ENCODE measurements at regions of chr17 and their contacts with region 1.

Region 1: GRCh38 chr17:60599620-60600489 is at the start of gene PPM1D:
- DNase-seq: peak; percentile 99
- H3K4me3 Mint-ChIP-seq: peak within 1 kb of the TSS; percentile 86
- H3K27ac Mint-ChIP-seq: peak within 1 kb of the TSS; percentile 89
- H3K4me1 Mint-ChIP-seq: peaks cover 6% of the 10 kb centered on the region
- H3K27me3 Mint-ChIP-seq: no peaks in the 10 kb centered on the region
- CTCF ChIP-seq: no peak
- total RNA-seq, gene PPM1D: 14.3 and 16.1 TPM in 2 replicates

Region 2: GRCh38 chr17:60496051-60496450 is 103.8 kb before region 1 on chr17:
- CTCF ChIA-PET with region 1: no interaction called
- POLR2A ChIA-PET with region 1: no interaction called
- intact Hi-C with region 1: no loop called
- DNase-seq: no peak
- H3K4me3 Mint-ChIP-seq: no peak overlapping the region
- H3K27ac Mint-ChIP-seq: no peak overlapping the region
- H3K4me1 Mint-ChIP-seq: no peaks in the 10 kb centered on the region
- H3K27me3 Mint-ChIP-seq: no peaks in the 10 kb centered on the region
- CTCF ChIP-seq: no peak

Region 3: DNA sequence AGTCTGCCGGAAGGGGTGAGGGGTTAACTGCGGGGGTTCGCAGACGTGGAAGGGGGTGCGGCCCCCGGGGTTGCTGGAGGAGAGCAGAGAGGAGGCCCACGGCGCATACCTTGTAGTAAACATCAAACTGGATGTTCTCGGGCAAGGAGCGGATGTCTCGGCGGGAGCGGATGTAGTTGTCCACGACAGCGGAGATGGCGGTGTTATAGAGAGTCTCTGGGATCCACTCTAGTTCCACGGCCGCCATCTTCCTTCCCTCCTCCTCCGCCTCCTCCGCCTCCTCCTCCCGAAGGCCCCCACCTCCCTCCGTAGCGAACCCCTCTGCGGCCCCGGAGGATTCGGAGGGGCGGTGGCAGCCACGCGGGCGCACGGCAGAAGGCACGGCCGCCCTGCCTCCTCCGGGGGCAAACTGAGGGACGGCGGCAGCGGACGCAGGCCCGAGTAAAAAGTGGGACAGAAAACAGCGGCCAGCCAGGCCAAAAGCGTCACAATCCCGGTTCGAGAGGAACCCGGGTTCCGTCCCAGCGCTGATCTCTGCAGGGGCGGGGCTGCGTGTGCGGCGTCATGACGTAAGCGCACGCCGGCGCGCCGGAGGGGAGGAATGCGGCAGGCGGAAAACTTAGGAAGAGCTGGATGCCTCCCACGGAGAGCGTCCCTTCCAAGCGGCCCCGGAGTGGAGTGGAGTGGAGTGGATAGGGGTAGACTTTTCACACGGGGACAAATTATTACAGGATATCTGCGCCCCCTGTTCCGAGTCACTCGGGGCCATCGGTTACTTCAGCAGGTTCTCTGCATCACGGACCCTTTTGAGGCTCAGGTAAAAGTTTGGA is 74.0 kb before region 1 on chr17 and contains the start of gene APPBP2:
- CTCF ChIA-PET with region 1: interaction called, 3 read pairs
- POLR2A ChIA-PET with region 1: interaction called, 113 read pairs
- intact Hi-C with region 1: loop called (anchors 2 kb)
- DNase-seq: peak; percentile 85
- H3K4me3 Mint-ChIP-seq: peak within 1 kb of the TSS; percentile 91
- H3K27ac Mint-ChIP-seq: peak within 1 kb of the TSS; percentile 98
- H3K4me1 Mint-ChIP-seq: peaks cover 30% of the 10 kb centered on the region
- H3K27me3 Mint-ChIP-seq: no peaks in the 10 kb centered on the region
- CTCF ChIP-seq: no peak
- total RNA-seq, gene APPBP2: 33.1 and 39.6 TPM in 2 replicates

Region 4: DNA sequence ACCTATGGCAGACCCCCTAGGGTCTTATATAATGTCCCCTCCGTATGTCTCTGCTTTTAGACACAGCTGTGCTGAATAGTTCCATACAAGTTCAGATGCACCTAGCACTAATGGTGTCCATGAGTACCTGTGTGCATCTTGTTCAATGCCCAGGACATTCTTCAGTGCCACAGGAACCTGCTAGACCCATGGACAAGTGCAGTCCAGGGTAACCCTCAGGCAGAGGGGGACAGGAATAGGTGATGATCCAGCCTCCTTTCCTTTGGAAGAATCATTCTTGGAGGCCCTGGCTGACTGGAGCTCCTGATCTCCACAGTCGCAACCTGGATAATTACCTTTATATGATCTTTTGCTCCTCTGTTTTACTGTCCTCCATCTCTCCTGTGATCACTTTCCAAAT is 28.3 kb before region 1 on chr17:
- CTCF ChIA-PET with region 1: interaction called, 4 read pairs
- POLR2A ChIA-PET with region 1: interaction called, 11 read pairs
- intact Hi-C with region 1: no loop called
- DNase-seq: no peak
- H3K4me3 Mint-ChIP-seq: no peak overlapping the region
- H3K27ac Mint-ChIP-seq: no peak overlapping the region
- H3K4me1 Mint-ChIP-seq: peaks cover 5% of the 10 kb centered on the region
- H3K27me3 Mint-ChIP-seq: no peaks in the 10 kb centered on the region
- CTCF ChIP-seq: no peak

Region 5: DNA sequence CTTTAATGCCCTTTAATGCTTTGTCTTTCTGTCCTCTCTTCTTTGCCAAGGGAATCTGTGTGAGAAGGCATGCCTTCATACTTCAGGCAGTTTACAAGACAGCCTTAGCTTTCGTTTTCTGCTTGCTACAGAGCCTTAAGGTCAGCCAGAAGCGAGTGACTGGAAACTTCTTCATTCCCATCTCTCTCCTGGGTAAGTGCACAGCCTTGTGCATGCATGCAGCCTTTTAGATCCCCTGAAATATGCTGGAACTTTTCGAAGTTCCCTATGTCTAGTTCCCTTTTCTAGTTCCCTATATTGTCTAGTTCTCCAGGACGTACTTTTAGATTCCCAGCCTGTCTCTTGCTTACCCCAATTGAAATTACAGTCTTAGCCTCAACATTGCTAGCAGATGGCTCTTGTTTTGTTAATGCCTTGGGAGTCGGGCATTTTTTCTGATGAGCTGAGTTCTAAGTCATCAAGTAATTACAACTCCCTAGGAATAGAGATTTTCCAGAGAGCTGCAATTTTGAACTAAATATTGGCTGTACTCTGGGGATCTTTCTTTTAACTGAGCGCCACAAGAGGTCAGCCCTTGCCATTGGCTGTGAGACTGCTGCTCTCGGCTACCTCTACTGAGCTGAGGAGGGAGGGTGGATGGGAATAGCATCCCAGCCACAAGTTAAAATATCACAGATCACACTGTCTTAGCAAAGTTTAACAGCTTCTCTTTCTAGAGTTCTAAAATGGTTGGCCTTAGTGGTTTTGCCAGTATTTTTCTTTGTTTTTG is 22.5 kb before region 1 on chr17:
- CTCF ChIA-PET with region 1: interaction called, 4 read pairs
- POLR2A ChIA-PET with region 1: interaction called, 16 read pairs
- intact Hi-C with region 1: no loop called
- DNase-seq: peak; percentile 11
- H3K4me3 Mint-ChIP-seq: peak overlapping the region; percentile 48
- H3K27ac Mint-ChIP-seq: peak overlapping the region; percentile 25
- H3K4me1 Mint-ChIP-seq: peaks cover 6% of the 10 kb centered on the region
- H3K27me3 Mint-ChIP-seq: no peaks in the 10 kb centered on the region
- CTCF ChIP-seq: no peak

Region 6: DNA sequence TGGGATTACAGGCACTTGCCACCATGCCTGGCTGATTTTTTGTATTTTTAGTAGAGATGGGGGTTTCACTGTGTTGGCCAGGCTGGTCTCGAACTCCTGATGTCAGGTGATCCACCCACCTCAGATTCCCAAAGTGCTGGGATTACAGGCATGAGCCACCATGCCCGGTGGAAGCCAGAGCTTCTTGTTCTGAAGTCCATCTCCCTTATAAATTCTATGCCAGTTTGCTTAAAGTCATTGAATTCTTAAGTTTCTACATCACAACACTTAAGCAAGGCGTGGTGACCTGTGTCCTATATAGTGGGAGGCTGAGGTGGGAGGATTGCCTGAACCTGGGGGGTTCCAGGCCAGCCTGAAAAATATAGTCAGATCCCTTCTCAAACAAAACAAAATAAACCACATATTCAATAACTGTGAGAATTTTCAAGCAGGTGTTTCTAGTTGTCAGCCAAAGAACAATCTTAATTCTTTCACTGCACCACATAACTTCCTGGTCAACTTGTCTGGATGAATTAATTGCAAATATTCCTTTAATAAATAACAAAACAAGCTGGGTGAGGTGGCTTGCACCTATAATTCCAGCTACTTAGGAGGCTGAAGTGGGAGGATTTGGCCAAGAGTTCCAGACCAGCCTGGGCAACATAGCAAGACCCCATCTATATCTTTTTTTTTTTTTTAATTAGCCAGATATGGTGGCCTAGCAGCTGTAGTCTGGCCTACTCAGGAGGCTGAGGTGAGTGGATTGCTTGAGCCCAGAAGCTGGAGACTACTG is 17.0 kb before region 1 on chr17:
- CTCF ChIA-PET with region 1: interaction called, 5 read pairs
- POLR2A ChIA-PET with region 1: interaction called, 16 read pairs
- intact Hi-C with region 1: no loop called
- DNase-seq: no peak
- H3K4me3 Mint-ChIP-seq: no peak overlapping the region
- H3K27ac Mint-ChIP-seq: no peak overlapping the region
- H3K4me1 Mint-ChIP-seq: no peaks in the 10 kb centered on the region
- H3K27me3 Mint-ChIP-seq: no peaks in the 10 kb centered on the region
- CTCF ChIP-seq: no peak

Region 7: DNA sequence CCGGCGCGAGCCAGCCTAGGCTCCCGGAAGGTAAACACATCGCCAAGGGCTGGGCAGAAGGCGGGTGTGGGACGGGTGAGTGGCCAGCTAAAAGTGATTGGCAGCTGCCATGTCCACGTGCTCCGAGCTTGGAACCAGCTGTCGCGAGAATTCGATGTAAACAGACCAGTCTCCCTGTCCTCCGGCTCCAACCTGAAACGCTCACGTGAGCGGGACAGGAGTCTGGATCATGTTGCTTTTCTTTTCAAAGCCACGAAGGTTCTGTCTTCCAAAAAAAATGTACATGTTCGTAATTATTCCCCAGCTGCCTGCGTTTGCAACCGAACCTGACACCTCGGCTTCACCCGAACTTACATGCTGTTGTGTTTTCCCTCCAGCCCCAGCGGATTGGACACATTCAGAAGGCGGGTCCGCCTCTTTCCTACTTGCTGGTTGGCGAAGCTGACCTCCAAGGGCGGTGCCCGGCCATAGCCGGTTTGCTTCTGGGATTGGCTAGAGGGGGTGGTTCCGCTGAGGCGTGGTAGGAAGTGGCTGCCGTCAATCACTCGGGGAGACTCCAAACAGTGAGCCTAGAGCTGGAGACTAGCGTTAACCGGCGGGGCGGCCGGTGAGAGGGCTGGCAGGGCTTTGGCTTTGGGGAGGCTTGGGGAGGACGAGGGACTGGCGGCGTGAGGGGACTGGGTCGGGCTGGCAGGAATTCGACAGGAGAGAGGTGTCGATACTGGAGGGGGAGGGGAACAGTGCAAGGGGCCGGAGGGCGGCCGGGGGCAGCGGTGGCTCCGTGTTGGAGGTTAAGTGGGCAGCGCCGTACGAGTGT is 77.7 kb after region 1 on chr17 and contains the start of gene BCAS3:
- CTCF ChIA-PET with region 1: no interaction called
- POLR2A ChIA-PET with region 1: interaction called, 43 read pairs
- intact Hi-C with region 1: loop called (anchors 1 kb)
- DNase-seq: peak; percentile 99
- H3K4me3 Mint-ChIP-seq: peak within 1 kb of the TSS; percentile 98
- H3K27ac Mint-ChIP-seq: peak within 1 kb of the TSS; percentile 98
- H3K4me1 Mint-ChIP-seq: no peaks in the 10 kb centered on the region
- H3K27me3 Mint-ChIP-seq: no peaks in the 10 kb centered on the region
- CTCF ChIP-seq: no peak
- total RNA-seq, gene BCAS3: 14.6 and 19.6 TPM in 2 replicates